Transverse colon (tissue), 4 donors: ENCODE measurements at regions of chr16 and their contacts with region 1.

Region 1: GRCh38 chr16:74623214-74623842 is 16.4 kb upstream of the GLG1 start:
- DNase-seq: no peak
- H3K4me3 ChIP-seq: no peak overlapping the region
- H3K27ac ChIP-seq: no peak overlapping the region
- H3K4me1 ChIP-seq: no peaks in the 10 kb centered on the region
- H3K27me3 ChIP-seq: no peaks in the 10 kb centered on the region
- CTCF ChIP-seq: peak; percentile 51 to 71 (median 59)
- EP300 ChIP-seq: no peak
- POLR2A ChIP-seq: no peak

Region 2: GRCh38 chr16:74480141-74481029 is 142.9 kb before region 1 on chr16:
- in situ Hi-C with region 1: loop called in 1 of 4 experiments (anchors 25 kb)
- intact Hi-C with region 1: loop called (anchors 10 kb)
- DNase-seq: peak; percentile 86
- H3K4me3 ChIP-seq: no peak overlapping the region
- H3K27ac ChIP-seq: peak overlapping the region; percentile 60 to 83 (median 71)
- H3K4me1 ChIP-seq: peaks cover 8 to 40% (median 32%) of the 10 kb centered on the region in 4 donors
- H3K27me3 ChIP-seq: no peaks in the 10 kb centered on the region
- CTCF ChIP-seq: no peak
- EP300 ChIP-seq: no peak
- POLR2A ChIP-seq: no peak

Region 3: GRCh38 chr16:74998481-74999218 is 375.3 kb after region 1 on chr16 and contains the start of gene ZNRF1:
- in situ Hi-C with region 1: no loop called
- intact Hi-C with region 1: no loop called
- DNase-seq: peak; percentile 88
- H3K4me3 ChIP-seq: peak within 1 kb of the TSS; percentile 77 to 97 (median 95)
- H3K27ac ChIP-seq: peak within 1 kb of the TSS; percentile 84 to 91 (median 88)
- H3K4me1 ChIP-seq: peaks cover 0 to 29% (median 21%) of the 10 kb centered on the region in 4 donors
- H3K27me3 ChIP-seq: no peaks in the 10 kb centered on the region
- CTCF ChIP-seq: peak; percentile 79 to 94 (median 85)
- EP300 ChIP-seq: no peak
- POLR2A ChIP-seq: no peak
- total RNA-seq, gene ZNRF1: 28.5 to 58.4 (median 40.4) TPM

Region 4: GRCh38 chr16:75148311-75149195 is 525.2 kb after region 1 on chr16 and contains the start of gene ZFP1:
- in situ Hi-C with region 1: no loop called
- intact Hi-C with region 1: no loop called
- DNase-seq: peak; percentile 96
- H3K4me3 ChIP-seq: peak within 1 kb of the TSS; percentile 86 to 100 (median 94)
- H3K27ac ChIP-seq: peak within 1 kb of the TSS; percentile 96 to 100 (median 98)
- H3K4me1 ChIP-seq: peaks cover 0 to 10% (median 0%) of the 10 kb centered on the region in 4 donors
- H3K27me3 ChIP-seq: no peaks in the 10 kb centered on the region
- CTCF ChIP-seq: no peak
- EP300 ChIP-seq: no peak
- POLR2A ChIP-seq: peak; percentile 65
- total RNA-seq, gene ZFP1: 1.1 to 56.7 (median 6.3) TPM